ENCODE measurements at regions of chr12 and their contacts with region 1.

Region 1: DNA sequence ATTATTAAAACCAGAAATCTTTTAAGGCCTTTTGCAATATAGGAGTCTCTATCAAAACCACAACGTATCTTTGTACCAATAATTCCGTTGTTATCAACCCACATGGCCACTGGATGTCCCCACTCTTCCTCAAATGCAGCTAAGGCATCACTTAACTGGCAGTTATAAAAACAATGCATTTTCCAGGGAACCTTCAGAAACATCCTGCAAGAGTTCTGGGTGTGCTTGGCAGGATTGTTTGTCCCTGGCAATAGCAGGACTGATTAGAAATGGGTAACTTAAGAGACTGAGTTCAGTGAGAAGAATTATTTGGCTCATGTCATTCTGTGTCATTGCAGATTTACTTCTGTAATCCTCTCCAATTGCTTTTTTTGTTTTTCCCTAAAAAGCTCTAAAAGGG is 112.0 kb downstream of the SLC15A5 start:
- DNase-seq: peak; percentile 6 to 40
- ATAC-seq: peak; percentile 58 to 60
- H3K4me3 ChIP-seq: no peak overlapping the region
- H3K27ac ChIP-seq: no peak overlapping the region
- H3K4me1 ChIP-seq: no peaks in the 10 kb centered on the region
- H3K27me3 ChIP-seq: no peaks in the 10 kb centered on the region
- CTCF ChIP-seq: no peak
- POLR2A ChIP-seq: no peak

Region 2: GRCh38 chr12:16272222-16272621 is 106.7 kb after region 1 on chr12:
- in situ Hi-C with region 1: loop called in 1 of 4 experiments (anchors 25 kb)
- intact Hi-C with region 1: no loop called
- DNase-seq: no peak
- ATAC-seq: no peak
- H3K4me3 ChIP-seq: no peak overlapping the region
- H3K27ac ChIP-seq: no peak overlapping the region
- H3K4me1 ChIP-seq: no peaks in the 10 kb centered on the region
- H3K27me3 ChIP-seq: no peaks in the 10 kb centered on the region
- CTCF ChIP-seq: no peak
- POLR2A ChIP-seq: no peak

Region 3: DNA sequence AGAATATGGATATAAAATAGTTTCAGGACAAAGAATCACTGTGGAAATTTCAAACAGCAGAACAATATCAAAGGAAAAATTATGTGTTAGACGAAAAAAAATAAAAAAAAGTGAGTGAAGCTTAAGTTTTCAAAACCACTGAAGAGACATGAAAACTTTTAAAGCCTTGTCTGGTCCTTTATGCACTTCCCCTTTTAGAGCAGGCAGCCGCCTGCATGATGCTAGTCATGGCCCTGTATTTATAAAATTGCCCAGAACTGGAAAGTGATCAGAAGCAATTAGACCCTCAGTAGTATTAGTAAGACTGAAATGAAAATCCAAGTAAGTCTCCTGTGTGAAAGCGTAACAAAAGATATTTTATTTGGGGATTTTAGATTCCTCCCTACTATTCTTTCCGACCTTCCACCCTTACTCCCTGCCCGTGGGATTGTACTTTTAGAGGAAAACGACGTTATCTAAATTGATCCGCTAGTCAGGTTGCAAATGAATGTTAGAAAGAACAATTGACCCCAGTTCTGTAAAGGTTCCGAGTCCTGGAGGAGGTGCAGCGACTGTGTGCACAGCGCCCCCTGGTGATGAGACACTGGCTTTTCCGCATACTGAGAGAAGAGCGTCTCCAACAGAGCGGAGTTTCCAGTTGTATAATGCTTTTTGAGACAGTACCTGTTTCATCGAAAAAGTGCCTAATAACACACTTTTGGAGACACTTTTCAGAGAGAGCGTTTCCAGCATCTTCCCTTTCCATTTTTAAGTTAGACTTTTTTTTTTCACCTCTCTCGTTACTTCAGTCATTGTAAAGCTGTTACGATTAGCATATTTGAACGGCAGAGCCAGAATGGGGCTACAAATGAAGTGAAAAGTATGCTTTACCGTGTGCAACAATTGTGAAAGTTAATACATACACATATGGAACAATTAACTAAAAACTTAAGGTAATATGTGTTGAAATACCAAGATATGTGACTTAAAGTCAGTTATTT is 194.3 kb after region 1 on chr12:
- in situ Hi-C with region 1: no loop called
- intact Hi-C with region 1: loop called (anchors 10 kb)
- DNase-seq: peak in 1 of 2 donors; percentile 21
- ATAC-seq: no peak
- H3K4me3 ChIP-seq: no peak overlapping the region
- H3K27ac ChIP-seq: no peak overlapping the region
- H3K4me1 ChIP-seq: no peaks in the 10 kb centered on the region
- H3K27me3 ChIP-seq: no peaks in the 10 kb centered on the region
- CTCF ChIP-seq: peak in 3 of 5 experiments; percentile 18 to 33 (median 20)
- POLR2A ChIP-seq: no peak

Measured in gastrocnemius medialis (tissue), 4 donors.